Posterior vena cava (tissue), 2 donors: ENCODE measurements at regions of chr7 and their contacts with region 1.

Region 1: GRCh38 chr7:1086588-1087464 is 1.1 kb upstream of the GPER1 start:
- DNase-seq: peak; percentile 93

Region 2: DNA sequence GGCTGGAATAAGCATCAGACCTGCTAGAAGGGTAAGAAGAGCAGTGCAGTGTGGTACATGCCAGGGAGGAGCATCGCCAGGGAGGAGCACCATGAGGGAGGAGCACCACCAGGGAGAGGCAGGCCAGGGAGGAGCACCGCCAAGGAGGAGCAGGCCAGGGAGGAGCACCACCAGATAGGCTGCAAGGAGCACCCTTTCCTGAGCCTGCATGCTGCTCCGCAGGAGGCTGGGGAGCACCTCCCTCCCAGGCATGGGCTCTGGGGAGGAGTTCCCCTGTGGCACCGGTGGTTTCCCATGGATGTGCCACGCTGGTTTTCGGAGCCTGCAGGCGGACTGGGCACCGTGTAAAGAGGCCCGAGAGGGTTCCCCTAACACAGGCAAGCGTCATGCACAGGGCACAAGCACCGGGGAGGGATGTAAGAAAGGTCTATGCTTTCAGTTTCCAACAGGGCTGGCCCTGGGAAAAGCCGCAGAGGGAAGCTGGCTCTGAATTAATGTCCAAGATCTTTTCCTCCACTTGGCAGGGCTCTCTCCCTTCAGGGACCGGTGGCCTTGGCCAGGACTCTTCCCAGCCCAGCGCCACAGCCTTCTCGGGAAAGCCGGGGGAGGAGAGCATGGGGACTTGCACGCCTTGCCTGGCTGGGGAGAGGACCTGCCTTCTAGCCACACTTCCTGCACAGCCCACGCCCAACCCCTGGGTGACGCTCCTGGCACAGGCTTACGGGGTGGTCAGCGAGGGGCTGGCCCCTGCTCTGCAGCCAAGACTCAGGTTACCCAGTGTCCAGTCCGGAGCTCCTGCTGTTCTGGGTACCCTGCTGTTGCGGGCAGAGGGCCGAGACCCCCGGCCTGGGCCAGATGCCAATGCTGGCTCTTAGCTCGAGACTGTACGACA is 10.4 kb before region 1 on chr7:
- intact Hi-C with region 1: no loop called
- DNase-seq: no peak

Region 3: DNA sequence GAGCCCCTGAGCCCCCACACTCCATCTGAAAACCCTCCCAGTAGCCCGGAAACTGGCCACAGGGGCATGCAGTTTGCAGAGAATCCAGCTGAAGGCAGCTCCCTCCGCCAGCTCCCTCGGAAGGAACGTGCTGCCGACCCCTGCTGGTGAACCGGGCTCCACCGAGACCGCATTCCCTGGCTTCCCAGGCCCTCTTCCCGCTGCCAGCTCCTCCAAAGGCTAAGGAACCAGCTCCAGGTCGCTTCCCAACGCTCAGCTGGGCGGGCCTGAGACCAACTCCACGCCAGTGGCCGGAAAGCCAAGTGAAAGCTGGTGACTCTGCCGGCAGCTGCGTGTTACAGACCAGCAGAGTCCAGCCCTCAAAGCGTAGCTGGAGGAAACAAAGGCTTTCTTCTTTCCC is 36.9 kb after region 1 on chr7:
- intact Hi-C with region 1: loop called in 1 of 2 experiments (anchors 5 kb)
- DNase-seq: peak; percentile 96